OCI-LY7 (cell line): ENCODE measurements at regions of chr19 and their contacts with region 1.

Region 1: GRCh38 chr19:49097455-49098288 is 12.4 kb downstream of the SNRNP70 start:
- DNase-seq: peak; percentile 80
- H3K4me3 ChIP-seq: no peak overlapping the region
- H3K27ac ChIP-seq: no peak overlapping the region
- H3K4me1 ChIP-seq: no peaks in the 10 kb centered on the region
- CTCF ChIP-seq: peak; percentile 100

Region 2: GRCh38 chr19:48543121-48544056 is 554.3 kb before region 1 on chr19:
- CTCF ChIA-PET with region 1: no interaction called
- POLR2A ChIA-PET with region 1: no interaction called
- intact Hi-C with region 1: no loop called
- DNase-seq: no peak
- H3K4me3 ChIP-seq: no peak overlapping the region
- H3K27ac ChIP-seq: no peak overlapping the region
- H3K4me1 ChIP-seq: no peaks in the 10 kb centered on the region
- CTCF ChIP-seq: no peak

Region 3: GRCh38 chr19:49148784-49149651 is 51.3 kb after region 1 on chr19:
- CTCF ChIA-PET with region 1: no interaction called
- POLR2A ChIA-PET with region 1: no interaction called
- intact Hi-C with region 1: loop called (anchors 2 kb)
- DNase-seq: peak; percentile 96
- H3K4me3 ChIP-seq: peak overlapping the region; percentile 83
- H3K27ac ChIP-seq: peak overlapping the region; percentile 36
- H3K4me1 ChIP-seq: peaks cover 32% of the 10 kb centered on the region
- CTCF ChIP-seq: no peak

Region 4: DNA sequence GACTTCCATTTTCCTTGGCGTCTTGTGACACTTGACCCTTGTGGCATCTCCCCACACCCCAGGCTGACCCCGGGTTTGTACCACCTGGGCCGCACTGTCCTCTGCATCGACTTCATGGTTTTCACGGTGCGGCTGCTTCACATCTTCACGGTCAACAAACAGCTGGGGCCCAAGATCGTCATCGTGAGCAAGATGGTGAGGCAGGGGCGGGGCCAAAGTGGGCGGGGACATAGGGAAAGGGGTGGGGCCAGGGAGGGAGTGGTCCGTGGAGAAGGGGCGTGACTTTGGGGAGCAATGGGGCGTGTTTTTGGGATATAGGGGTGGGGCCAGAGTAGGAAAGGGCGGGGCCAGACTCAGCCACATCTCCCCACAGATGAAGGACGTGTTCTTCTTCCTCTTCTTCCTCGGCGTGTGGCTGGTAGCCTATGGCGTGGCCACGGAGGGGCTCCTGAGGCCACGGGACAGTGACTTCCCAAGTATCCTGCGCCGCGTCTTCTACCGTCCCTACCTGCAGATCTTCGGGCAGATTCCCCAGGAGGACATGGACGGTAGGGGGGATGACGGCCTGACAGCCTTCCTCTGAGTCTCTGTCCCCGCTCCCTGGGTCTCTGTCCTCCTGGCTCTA is 102.7 kb after region 1 on chr19:
- CTCF ChIA-PET with region 1: interaction called, 4 read pairs
- POLR2A ChIA-PET with region 1: interaction called, 7 read pairs
- intact Hi-C with region 1: loop called (anchors 5 kb)
- DNase-seq: peak; percentile 76
- H3K4me3 ChIP-seq: peak overlapping the region; percentile 71
- H3K27ac ChIP-seq: peak overlapping the region; percentile 35
- H3K4me1 ChIP-seq: peaks cover 26% of the 10 kb centered on the region
- CTCF ChIP-seq: no peak

Region 5: DNA sequence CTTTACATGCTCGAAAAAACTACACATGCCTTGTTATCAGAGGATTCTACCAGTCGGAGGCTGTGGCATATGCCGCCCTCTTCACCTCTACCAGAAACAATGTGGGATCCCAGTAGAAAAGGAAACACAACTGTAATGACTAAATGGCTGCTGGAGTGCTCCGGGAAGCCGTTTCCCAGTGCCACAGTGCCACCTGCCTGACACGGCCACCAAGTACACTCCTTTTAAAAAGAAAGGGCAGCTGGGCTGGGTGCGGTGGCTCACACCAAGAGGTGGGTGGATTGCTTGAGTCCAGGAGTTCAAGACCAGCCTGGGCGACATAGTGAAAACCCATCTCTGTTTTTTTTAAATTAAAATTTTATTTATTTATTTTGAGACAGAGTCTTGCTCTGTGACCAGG is 127.2 kb after region 1 on chr19:
- CTCF ChIA-PET with region 1: interaction called, 6 read pairs
- POLR2A ChIA-PET with region 1: no interaction called
- intact Hi-C with region 1: loop called (anchors 5 kb)
- DNase-seq: peak; percentile 72
- H3K4me3 ChIP-seq: no peak overlapping the region
- H3K27ac ChIP-seq: no peak overlapping the region
- H3K4me1 ChIP-seq: peaks cover 11% of the 10 kb centered on the region
- CTCF ChIP-seq: peak; percentile 82